Sciatic nerve (tissue), 2 donors: ENCODE measurements at regions of chr14 and their contacts with region 1.

Region 1: DNA sequence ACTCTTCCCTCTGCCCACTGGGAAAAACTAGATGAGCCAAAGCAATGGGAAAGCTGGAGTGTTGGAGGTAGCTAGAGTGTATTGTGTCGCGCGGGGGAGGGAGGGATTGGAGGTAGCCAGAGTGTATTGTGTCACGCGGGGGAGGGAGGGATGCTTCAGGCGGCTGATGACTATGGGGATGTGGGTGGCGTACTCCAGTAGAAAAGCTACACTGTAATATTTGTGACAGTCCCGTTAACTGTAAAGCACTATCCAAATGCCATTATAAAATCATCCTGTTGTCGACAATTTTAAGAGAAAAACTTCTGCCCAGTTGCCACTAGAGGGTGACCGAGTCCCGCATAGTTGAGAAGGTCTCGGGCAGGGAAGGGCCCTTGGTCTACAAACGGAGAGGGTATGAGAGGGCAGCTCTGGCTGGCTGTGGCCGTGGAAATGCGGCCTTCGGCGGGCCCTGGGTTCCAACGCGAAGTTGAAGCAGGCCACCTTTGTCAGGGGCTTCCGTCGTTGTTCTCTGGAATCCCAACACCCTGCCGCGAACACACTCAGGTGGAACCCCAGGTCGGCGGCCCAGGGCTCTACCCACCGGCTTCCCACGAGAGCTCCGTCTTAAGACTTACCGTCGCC is 15.1 kb upstream of the PLEK2 start:
- DNase-seq: peak; percentile 86
- ATAC-seq: peak; percentile 89

Region 2: GRCh38 chr14:67571272-67571850 is 144.3 kb after region 1 on chr14:
- intact Hi-C with region 1: loop called (anchors 5 kb)
- DNase-seq: peak; percentile 81
- ATAC-seq: peak; percentile 77